CD8-positive, alpha-beta T cell (primary cell): ENCODE measurements at regions of chr14 and their contacts with region 1.

Region 1: DNA sequence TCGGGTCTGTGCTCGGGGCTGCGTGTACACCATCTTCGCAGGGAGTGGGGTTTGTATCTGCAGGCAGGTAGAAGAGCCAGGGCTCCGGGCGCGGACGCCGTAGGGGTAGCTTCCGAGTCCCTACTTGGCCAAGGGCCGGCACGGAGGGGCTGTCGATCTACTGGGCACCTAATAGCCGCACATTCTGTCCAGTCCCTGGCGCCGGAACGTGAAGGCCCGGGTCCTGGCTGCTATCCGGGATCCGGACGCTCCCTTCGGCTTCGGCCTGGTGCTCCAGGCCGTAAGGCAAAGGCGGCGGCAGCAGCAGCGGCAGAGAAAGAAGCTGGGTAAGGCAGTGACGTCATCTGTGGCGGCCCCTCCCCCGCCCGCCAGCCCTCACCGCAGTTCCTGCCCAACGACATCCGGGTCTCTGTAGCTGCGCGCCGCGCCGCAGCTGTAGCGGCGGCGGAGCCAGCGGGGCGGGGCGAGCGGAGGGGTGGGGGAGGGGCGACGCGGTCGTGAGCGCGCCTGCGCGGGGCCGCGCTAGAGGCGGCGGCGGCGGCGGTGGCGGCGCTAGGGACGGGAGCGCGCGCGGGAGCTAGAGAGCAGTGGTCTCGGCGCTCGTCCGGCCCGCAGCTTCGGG is at the start of gene PPM1A:
- DNase-seq: peak; percentile 93 to 99 (median 96)
- ATAC-seq: peak; percentile 76
- H3K4me3 ChIP-seq: peak within 1 kb of the TSS; percentile 92
- H3K4me3 Mint-ChIP-seq: peak within 1 kb of the TSS; percentile 93
- H3K27ac ChIP-seq: peak within 1 kb of the TSS; percentile 99 to 100
- H3K27ac Mint-ChIP-seq: peak within 1 kb of the TSS; percentile 100
- H3K4me1 ChIP-seq: peaks cover 41% of the 10 kb centered on the region
- H3K4me1 Mint-ChIP-seq: peaks cover 48% of the 10 kb centered on the region
- H3K27me3 ChIP-seq: no peaks in the 10 kb centered on the region
- H3K27me3 Mint-ChIP-seq: no peaks in the 10 kb centered on the region
- CTCF ChIP-seq: no peak
- total RNA-seq, gene PPM1A: 114 to 115 TPM

Region 2: DNA sequence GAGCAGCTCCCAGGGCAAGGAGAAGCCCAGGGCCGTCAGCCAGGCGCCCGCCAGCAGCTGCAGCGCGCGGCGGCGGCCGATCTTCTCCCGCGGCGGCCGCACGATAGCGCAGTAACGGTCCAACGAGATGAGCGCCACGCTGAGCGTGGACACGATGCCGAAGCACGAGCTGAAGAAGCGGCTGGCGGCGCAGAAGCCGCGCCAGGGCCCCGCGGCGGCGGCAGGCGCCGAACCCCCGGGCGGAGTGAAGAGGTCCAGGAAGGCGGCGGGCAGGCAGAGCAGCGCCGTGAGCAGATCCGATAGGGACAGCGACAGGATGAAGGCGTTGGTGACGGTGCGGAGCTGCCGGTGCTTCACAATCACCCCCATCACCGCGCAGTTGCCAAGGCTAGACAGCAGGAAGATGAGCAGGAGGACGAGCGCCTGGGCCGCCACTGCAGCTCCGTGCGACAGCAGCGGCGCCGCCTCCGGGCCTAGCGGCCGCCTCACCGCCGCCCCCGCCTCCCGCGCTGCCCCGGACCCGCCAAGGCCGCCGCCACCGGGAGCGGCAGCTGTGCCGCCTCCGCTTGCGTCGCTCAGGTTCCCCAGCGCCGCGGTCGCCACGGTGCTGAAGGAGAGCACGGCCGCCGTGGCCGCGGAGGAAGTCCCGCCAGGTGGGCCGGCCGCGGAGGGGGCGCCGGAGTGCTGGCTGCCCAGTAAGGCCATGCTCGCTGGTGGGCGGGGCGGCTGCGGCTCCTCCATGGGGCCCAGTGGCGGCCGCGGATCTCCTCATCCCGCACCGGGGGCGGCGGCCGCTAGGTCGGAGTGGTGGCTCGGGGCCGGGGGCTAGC is 784.1 kb before region 1 on chr14:
- CTCF ChIA-PET with region 1: no interaction called
- POLR2A ChIA-PET with region 1: no interaction called
- intact Hi-C with region 1: loop called in 1 of 2 experiments (anchors 5 kb)
- DNase-seq: peak; percentile 15 to 77 (median 55)
- ATAC-seq: peak; percentile 69
- H3K4me3 ChIP-seq: peak overlapping the region; percentile 50 to 56
- H3K4me3 Mint-ChIP-seq: peak overlapping the region; percentile 90
- H3K27ac ChIP-seq: peak overlapping the region in 1 of 2 experiments; percentile 42
- H3K27ac Mint-ChIP-seq: peak overlapping the region; percentile 58
- H3K4me1 ChIP-seq: peaks cover 9% of the 10 kb centered on the region
- H3K4me1 Mint-ChIP-seq: peaks cover 11% of the 10 kb centered on the region
- H3K27me3 ChIP-seq: no peaks in the 10 kb centered on the region
- H3K27me3 Mint-ChIP-seq: peaks cover 5% of the 10 kb centered on the region
- CTCF ChIP-seq: no peak

Region 3: DNA sequence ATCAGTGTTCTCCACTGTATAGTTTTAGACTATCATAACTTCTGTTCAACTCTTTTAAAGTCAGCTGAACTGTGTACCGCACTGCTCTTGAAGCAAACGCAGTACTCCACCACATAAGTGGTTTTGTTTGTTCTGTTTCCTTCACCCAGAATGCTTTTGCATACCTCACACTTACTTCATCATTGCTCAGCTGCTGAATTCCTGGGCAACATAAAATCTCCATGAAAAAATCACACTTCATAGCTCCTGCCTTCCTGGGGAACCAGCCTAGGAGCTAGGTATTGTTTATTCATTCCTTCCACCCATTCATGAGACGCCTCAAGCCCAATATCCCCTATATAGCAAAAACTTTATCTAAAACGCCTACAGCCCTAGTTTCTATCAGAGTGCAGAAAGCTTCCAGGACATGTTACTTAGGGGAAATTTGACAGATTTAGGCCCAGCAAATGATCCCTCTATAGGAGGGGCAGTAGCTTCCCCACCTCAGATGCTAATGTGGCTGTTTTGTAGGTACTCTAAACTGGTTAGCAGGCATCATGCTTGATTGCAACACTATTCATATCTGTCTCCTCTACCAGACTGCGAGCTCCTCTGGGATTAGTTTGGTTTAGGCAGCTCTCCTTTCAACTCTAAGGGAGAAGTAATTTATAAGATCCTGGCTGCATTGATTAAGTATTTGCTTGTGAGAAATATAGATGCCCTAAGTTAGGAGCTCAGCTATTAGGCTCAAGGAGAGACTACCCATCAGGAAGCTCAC is 284.4 kb before region 1 on chr14:
- CTCF ChIA-PET with region 1: interaction called, 4 read pairs
- POLR2A ChIA-PET with region 1: interaction called, 5 read pairs
- intact Hi-C with region 1: loop called in 1 of 2 experiments (anchors 1 kb)
- DNase-seq: peak in 2 of 9 experiments; percentile 24 to 47
- ATAC-seq: peak; percentile 34
- H3K4me3 ChIP-seq: peak overlapping the region in 1 of 2 experiments; percentile 52
- H3K4me3 Mint-ChIP-seq: peak overlapping the region; percentile 88
- H3K27ac ChIP-seq: no peak overlapping the region
- H3K27ac Mint-ChIP-seq: peak overlapping the region; percentile 95
- H3K4me1 ChIP-seq: peaks cover 12% of the 10 kb centered on the region
- H3K4me1 Mint-ChIP-seq: peaks cover 18% of the 10 kb centered on the region
- H3K27me3 ChIP-seq: no peaks in the 10 kb centered on the region
- H3K27me3 Mint-ChIP-seq: no peaks in the 10 kb centered on the region
- CTCF ChIP-seq: no peak

Region 4: GRCh38 chr14:60204104-60204842 is 44.5 kb before region 1 on chr14:
- CTCF ChIA-PET with region 1: no interaction called
- POLR2A ChIA-PET with region 1: no interaction called
- intact Hi-C with region 1: no loop called
- DNase-seq: no peak
- ATAC-seq: no peak
- H3K4me3 ChIP-seq: no peak overlapping the region
- H3K4me3 Mint-ChIP-seq: no peak overlapping the region
- H3K27ac ChIP-seq: no peak overlapping the region
- H3K27ac Mint-ChIP-seq: no peak overlapping the region
- H3K4me1 ChIP-seq: no peaks in the 10 kb centered on the region
- H3K4me1 Mint-ChIP-seq: no peaks in the 10 kb centered on the region
- H3K27me3 ChIP-seq: peaks cover 0 to 7% of the 10 kb centered on the region in 2 experiments
- H3K27me3 Mint-ChIP-seq: peaks cover 19% of the 10 kb centered on the region
- CTCF ChIP-seq: no peak

Region 5: DNA sequence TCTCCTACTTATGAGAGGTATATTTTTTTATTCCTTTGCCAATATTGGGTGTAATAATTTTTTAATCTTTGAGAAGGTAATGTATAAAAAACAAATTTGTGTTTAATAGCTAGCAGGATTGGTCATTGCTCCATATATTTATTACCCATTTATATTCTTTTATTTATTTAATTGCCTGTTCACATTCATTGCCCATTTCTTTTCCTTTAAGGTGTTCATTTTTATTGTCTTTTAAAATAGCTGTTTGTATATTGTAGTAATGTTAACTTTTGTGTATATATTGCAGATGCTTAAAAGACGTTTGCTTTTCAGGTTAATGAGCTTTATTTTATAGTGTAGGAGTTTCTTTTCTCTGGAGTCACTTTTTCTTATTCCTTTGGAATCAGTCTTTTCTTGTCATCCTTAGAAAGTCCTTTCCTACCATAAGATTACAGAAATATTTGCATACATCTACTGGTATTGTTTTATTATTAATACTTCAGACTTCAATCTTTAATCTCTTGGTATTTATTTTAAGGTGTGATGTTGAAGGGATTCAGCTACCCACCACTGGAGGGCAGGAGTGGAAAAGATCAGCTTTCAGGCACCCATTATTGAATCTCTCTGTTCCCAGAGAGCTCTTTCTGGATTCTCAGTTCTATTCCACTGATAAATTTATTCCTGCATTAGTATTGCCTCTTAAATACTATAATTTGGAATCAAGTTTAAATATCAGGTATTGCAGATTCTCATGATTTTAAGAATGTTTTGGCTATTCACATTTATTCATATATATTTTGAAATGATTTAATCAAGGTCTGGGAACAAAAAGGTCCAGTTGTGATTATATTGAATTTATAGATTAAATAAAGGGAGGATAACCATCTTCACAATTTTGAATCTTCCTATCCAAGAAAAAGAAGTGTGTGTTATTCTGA is 17.5 kb after region 1 on chr14:
- CTCF ChIA-PET with region 1: interaction called, 5 read pairs
- POLR2A ChIA-PET with region 1: interaction called, 29 read pairs
- intact Hi-C with region 1: loop called (anchors 1 to 2 kb)
- DNase-seq: peak in 5 of 9 experiments; percentile 22 to 57 (median 29)
- ATAC-seq: peak; percentile 61
- H3K4me3 ChIP-seq: no peak overlapping the region
- H3K4me3 Mint-ChIP-seq: no peak overlapping the region
- H3K27ac ChIP-seq: no peak overlapping the region
- H3K27ac Mint-ChIP-seq: no peak overlapping the region
- H3K4me1 ChIP-seq: peaks cover 6% of the 10 kb centered on the region
- H3K4me1 Mint-ChIP-seq: peaks cover 33% of the 10 kb centered on the region
- H3K27me3 ChIP-seq: no peaks in the 10 kb centered on the region
- H3K27me3 Mint-ChIP-seq: no peaks in the 10 kb centered on the region
- CTCF ChIP-seq: peak; percentile 75

Region 6: DNA sequence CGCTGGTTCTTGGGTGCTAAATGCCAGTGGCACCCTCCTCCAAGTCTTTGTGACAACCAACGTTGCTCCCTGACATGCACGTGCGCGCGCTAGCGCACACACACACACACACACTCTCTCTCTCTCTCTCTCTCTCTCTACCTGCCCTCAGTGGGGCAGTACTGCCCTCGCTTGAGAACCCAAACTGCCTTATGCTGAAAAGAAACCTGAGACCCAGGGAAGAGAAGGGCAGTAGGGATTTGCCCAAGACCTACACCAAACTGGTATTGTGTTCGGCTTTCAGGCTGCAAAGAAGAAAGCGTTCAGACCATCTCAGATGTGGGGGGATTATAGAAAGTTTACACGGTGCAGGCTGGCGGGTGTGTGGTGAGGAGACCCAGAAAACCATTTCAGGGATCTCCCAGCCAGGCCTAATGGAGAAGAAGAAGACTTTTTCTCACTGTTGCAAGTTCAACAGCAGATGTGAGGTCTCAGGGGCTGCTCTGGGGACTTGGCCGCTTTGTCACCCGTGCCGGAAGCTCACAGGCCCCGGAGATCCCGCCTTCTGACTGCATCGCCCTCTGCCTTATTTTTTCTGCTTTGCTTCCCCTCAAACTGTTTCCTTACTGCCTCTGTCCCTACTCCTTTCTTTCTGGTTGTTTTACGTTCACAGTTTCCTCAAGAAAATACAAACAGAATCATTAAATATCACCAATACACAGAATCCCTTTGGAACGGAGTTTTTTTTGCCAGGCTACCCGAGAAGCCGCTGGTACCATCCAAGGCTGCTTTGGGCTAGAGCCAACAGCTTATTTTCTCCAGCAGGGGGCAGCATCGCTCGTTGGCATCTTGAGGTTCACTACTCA is 82.6 kb after region 1 on chr14:
- CTCF ChIA-PET with region 1: interaction called, 14 read pairs
- POLR2A ChIA-PET with region 1: interaction called, 19 read pairs
- intact Hi-C with region 1: loop called (anchors 1 to 5 kb)
- DNase-seq: peak; percentile 51 to 86 (median 80)
- ATAC-seq: peak; percentile 80
- H3K4me3 ChIP-seq: peak overlapping the region; percentile 52 to 55
- H3K4me3 Mint-ChIP-seq: peak overlapping the region; percentile 98
- H3K27ac ChIP-seq: peak overlapping the region; percentile 36 to 47
- H3K27ac Mint-ChIP-seq: peak overlapping the region; percentile 94
- H3K4me1 ChIP-seq: peaks cover 9% of the 10 kb centered on the region
- H3K4me1 Mint-ChIP-seq: peaks cover 33% of the 10 kb centered on the region
- H3K27me3 ChIP-seq: no peaks in the 10 kb centered on the region
- H3K27me3 Mint-ChIP-seq: peaks cover 30% of the 10 kb centered on the region
- CTCF ChIP-seq: peak; percentile 87

Region 7: DNA sequence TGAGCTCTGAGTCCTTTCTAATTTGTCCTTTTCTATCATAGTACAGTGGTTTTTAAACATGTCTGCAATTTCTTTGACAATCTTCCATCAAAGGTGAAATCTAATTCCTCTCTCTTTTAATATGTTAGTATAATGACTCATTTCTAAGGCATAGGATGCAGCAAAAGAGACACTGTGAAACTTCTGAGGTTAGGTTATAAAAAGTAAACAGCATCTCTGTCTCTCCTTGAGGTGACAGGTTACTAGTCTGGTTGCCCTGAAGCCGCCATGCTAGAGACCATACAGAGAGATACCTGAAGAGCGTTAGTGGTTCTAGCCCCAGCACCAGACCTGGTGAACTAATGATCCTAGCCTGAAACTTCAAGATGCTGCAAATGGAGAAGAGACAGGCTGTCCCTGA is 114.5 kb after region 1 on chr14:
- CTCF ChIA-PET with region 1: no interaction called
- POLR2A ChIA-PET with region 1: no interaction called
- intact Hi-C with region 1: no loop called
- DNase-seq: no peak
- ATAC-seq: no peak
- H3K4me3 ChIP-seq: no peak overlapping the region
- H3K4me3 Mint-ChIP-seq: no peak overlapping the region
- H3K27ac ChIP-seq: no peak overlapping the region
- H3K27ac Mint-ChIP-seq: no peak overlapping the region
- H3K4me1 ChIP-seq: no peaks in the 10 kb centered on the region
- H3K4me1 Mint-ChIP-seq: no peaks in the 10 kb centered on the region
- H3K27me3 ChIP-seq: no peaks in the 10 kb centered on the region
- H3K27me3 Mint-ChIP-seq: peaks cover 13% of the 10 kb centered on the region
- CTCF ChIP-seq: no peak

Region 8: GRCh38 chr14:60980811-60981632 is 732.2 kb after region 1 on chr14 and contains the starts of genes SLC38A6 and TRMT5:
- CTCF ChIA-PET with region 1: no interaction called
- POLR2A ChIA-PET with region 1: interaction called, 8 read pairs
- intact Hi-C with region 1: loop called (anchors 2 to 5 kb)
- DNase-seq: peak; percentile 79 to 94 (median 91)
- ATAC-seq: peak; percentile 88
- H3K4me3 ChIP-seq: peak within 1 kb of the TSS; percentile 94 to 98
- H3K4me3 Mint-ChIP-seq: no peak within 1 kb of the TSS
- H3K27ac ChIP-seq: peak within 1 kb of the TSS; percentile 90 to 92
- H3K27ac Mint-ChIP-seq: no peak within 1 kb of the TSS
- H3K4me1 ChIP-seq: peaks cover 23% of the 10 kb centered on the region
- H3K4me1 Mint-ChIP-seq: peaks cover 25% of the 10 kb centered on the region
- H3K27me3 ChIP-seq: no peaks in the 10 kb centered on the region
- H3K27me3 Mint-ChIP-seq: no peaks in the 10 kb centered on the region
- CTCF ChIP-seq: no peak
- total RNA-seq, gene SLC38A6: 8.3 to 8.5 TPM
- total RNA-seq, gene TRMT5: 1.8 to 1.9 TPM